ENCODE measurements at regions of chr16 and their contacts with region 1.

Region 1: GRCh38 chr16:2142942-2143877 is 5.2 kb upstream of the RAB26 start:
- DNase-seq: no peak
- H3K4me3 Mint-ChIP-seq: no peak overlapping the region
- H3K27ac Mint-ChIP-seq: no peak overlapping the region
- H3K4me1 Mint-ChIP-seq: peaks cover 10% of the 10 kb centered on the region
- H3K27me3 Mint-ChIP-seq: peaks cover 15% of the 10 kb centered on the region

Region 2: GRCh38 chr16:1863681-1864460 is 279.3 kb before region 1 on chr16:
- intact Hi-C with region 1: loop called (anchors 5 kb)
- DNase-seq: no peak
- H3K4me3 Mint-ChIP-seq: no peak overlapping the region
- H3K27ac Mint-ChIP-seq: no peak overlapping the region
- H3K4me1 Mint-ChIP-seq: no peaks in the 10 kb centered on the region
- H3K27me3 Mint-ChIP-seq: peaks cover 37% of the 10 kb centered on the region

Region 3: DNA sequence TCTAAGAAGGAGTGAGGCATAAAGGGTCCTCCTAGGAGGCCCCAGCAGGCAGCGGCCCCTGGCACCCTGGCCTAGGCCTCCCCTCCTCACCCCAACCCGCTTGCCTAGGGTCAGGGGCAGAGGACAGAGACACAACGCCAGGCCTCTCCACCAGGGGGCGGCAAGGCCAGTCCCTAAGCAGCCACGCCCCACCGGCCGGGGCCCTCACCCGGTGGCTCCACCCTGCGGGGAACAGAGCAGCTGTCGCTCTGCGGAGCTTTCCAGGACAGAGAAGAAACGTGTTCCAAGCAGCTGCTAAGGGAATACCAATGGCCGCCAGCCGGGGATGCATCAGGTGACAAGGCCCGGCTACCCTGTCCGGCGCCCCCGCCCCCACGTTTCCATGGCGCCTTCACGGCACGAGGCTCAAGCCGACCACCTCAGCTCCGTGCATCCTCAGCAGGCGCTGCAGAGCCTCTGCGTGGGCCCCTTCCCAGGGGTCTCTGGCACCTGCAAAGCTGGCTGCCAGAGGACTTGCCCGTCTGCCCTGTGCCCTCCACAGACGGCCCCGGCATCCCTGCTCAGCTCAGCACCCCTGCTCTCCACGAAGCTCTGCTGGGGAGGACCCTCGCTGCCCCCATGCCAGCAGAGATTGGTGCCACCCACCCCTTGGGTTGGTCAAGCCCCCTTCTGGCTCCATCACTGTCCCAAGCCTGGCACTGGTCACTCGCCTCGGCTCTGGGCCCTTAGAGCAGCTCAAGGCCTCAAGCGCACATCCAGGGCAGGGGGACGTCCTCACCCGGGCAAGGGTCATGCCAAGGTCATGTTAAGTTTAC is 139.2 kb before region 1 on chr16:
- intact Hi-C with region 1: loop called (anchors 1 kb)
- DNase-seq: peak; percentile 84
- H3K4me3 Mint-ChIP-seq: no peak overlapping the region
- H3K27ac Mint-ChIP-seq: no peak overlapping the region
- H3K4me1 Mint-ChIP-seq: peaks cover 19% of the 10 kb centered on the region
- H3K27me3 Mint-ChIP-seq: no peaks in the 10 kb centered on the region